Activated T-helper 2 cell treated with anti-CD3 and anti-CD28 coated beads, Interferon-gamma antibody, Interleukin-2, Interleukin-4, amounts not matched to agents 10 μg/mL and 5 μg/mL and 100 μg/mL, durations not matched to agents 14 hours and 24 hours and 36 hours (primary cell): ENCODE measurements at regions of chr11 and their contacts with region 1.

Region 1: GRCh38 chr11:96062134-96062533 is 138.2 kb upstream of the MTMR2 start:
- DNase-seq: no peak
- H3K4me3 Mint-ChIP-seq: peak overlapping the region; percentile 34
- H3K27ac Mint-ChIP-seq: peak overlapping the region; percentile 92
- H3K4me1 Mint-ChIP-seq: peaks cover 53% of the 10 kb centered on the region
- H3K27me3 Mint-ChIP-seq: no peaks in the 10 kb centered on the region

Region 2: DNA sequence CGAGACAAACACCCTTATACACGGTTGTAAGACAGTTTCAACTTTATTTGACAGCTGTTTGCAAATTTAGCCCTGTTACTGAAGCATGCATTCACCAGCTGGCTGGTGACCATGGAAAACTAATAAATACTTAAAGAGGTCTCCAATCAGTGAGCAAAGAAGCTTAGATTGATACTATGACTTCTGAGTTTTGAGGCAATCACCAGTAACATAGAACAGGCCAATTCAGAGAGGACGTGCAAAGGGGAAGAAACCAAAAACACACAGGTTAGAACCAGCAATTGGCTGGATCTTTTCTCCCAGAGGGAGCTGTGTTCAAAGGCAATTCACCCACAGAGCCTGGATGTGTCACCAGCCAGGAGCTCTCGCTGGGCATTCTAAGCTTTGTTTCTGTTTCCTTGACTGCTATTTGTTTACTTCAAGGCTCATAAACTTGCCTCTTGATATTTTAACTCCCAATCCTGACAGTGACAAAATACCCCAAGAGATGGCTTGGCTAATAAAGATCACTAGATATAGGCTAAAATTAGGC is 24.7 kb before region 1 on chr11:
- intact Hi-C with region 1: no loop called
- DNase-seq: no peak
- H3K4me3 Mint-ChIP-seq: no peak overlapping the region
- H3K27ac Mint-ChIP-seq: no peak overlapping the region
- H3K4me1 Mint-ChIP-seq: no peaks in the 10 kb centered on the region
- H3K27me3 Mint-ChIP-seq: no peaks in the 10 kb centered on the region

Region 3: GRCh38 chr11:96112201-96113128 is 50.3 kb after region 1 on chr11:
- intact Hi-C with region 1: loop called (anchors 1 kb)
- DNase-seq: no peak
- H3K4me3 Mint-ChIP-seq: peak overlapping the region; percentile 37
- H3K27ac Mint-ChIP-seq: peak overlapping the region; percentile 79
- H3K4me1 Mint-ChIP-seq: peaks cover 32% of the 10 kb centered on the region
- H3K27me3 Mint-ChIP-seq: no peaks in the 10 kb centered on the region

Region 4: GRCh38 chr11:96207459-96208449 is 145.6 kb after region 1 on chr11:
- intact Hi-C with region 1: loop called (anchors 5 kb)
- DNase-seq: no peak
- H3K4me3 Mint-ChIP-seq: peak overlapping the region; percentile 48
- H3K27ac Mint-ChIP-seq: peak overlapping the region; percentile 85
- H3K4me1 Mint-ChIP-seq: peaks cover 76% of the 10 kb centered on the region
- H3K27me3 Mint-ChIP-seq: no peaks in the 10 kb centered on the region

Region 5: GRCh38 chr11:96235751-96236150 is 173.6 kb after region 1 on chr11:
- intact Hi-C with region 1: loop called (anchors 2 kb)
- DNase-seq: peak; percentile 52
- H3K4me3 Mint-ChIP-seq: peak overlapping the region; percentile 65
- H3K27ac Mint-ChIP-seq: peak overlapping the region; percentile 89
- H3K4me1 Mint-ChIP-seq: peaks cover 36% of the 10 kb centered on the region
- H3K27me3 Mint-ChIP-seq: no peaks in the 10 kb centered on the region